ENCODE measurements at regions of chr6 and their contacts with region 1.

Region 1: DNA sequence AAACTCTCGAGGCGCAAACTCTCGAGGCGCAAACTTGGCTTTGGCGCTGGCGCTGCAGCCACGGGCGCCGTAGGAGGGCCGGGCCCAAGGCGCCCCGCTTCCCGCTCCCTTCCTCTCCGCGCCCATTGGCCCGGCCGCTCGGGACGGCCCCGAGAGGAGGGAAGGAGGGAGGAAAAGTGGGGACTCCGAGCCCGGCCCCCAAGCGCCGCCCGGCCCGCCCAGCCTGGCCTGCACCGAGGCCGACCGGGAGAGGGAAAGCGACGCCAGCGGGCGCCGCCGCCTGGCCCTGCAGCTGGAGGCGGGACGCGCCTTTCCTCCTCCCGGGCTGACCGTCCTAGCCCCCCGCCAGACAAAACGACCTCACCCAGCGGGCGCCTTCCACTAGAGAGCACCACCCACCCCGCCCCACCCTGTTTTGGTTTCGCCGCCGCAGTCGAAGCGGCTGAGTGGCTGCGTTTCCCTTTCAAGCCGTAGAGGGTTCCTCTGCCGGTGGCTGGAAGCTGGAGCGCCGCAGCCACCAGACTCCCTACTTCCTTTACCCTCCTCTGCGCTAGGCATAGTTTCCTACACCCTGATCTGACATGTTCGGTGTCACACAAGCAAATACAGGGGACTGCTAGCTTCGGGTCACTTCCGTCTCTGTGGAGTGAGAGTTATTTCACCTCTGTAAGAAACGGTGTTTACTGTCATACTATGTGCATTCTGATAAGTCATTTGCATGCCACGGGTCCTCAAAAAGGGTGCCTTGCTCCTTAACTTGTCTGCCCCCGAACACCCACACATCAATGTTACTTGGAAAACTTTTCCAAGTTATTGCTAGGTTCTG is at the start of gene MBOAT1:
- DNase-seq: peak; percentile 71
- H3K4me3 Mint-ChIP-seq: peak within 1 kb of the TSS; percentile 83
- H3K27ac Mint-ChIP-seq: peak within 1 kb of the TSS; percentile 85
- H3K4me1 Mint-ChIP-seq: peaks cover 30% of the 10 kb centered on the region
- H3K27me3 Mint-ChIP-seq: no peaks in the 10 kb centered on the region
- total RNA-seq, gene MBOAT1: 6.3 to 7.3 TPM

Region 2: DNA sequence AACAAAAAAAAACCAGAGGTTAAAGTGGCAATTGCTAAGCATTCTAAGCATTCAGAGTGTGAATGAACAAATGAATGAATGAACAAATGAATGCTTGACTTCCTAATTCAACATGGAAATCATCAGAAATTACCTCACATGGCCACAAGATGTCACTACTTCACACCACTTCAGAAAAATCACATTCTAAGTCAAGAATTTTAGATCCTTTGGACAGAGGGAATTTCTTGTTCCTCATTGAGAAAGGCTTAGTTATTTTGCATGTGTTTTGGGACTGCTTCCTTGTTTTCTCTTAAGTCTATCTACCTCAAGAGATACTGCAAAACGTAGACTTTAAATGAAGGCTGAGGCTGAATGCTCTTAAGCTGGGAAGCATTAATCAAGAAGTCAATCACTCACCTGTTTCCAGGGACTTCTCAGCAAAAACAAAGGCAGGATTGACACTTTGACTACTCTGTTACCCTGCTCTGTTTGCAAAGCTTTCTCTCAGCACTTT is 120.5 kb before region 1 on chr6:
- CTCF ChIA-PET with region 1: no interaction called
- intact Hi-C with region 1: loop called (anchors 1 kb)
- DNase-seq: peak; percentile 12
- H3K4me3 Mint-ChIP-seq: no peak overlapping the region
- H3K27ac Mint-ChIP-seq: no peak overlapping the region
- H3K4me1 Mint-ChIP-seq: no peaks in the 10 kb centered on the region
- H3K27me3 Mint-ChIP-seq: no peaks in the 10 kb centered on the region

Region 3: DNA sequence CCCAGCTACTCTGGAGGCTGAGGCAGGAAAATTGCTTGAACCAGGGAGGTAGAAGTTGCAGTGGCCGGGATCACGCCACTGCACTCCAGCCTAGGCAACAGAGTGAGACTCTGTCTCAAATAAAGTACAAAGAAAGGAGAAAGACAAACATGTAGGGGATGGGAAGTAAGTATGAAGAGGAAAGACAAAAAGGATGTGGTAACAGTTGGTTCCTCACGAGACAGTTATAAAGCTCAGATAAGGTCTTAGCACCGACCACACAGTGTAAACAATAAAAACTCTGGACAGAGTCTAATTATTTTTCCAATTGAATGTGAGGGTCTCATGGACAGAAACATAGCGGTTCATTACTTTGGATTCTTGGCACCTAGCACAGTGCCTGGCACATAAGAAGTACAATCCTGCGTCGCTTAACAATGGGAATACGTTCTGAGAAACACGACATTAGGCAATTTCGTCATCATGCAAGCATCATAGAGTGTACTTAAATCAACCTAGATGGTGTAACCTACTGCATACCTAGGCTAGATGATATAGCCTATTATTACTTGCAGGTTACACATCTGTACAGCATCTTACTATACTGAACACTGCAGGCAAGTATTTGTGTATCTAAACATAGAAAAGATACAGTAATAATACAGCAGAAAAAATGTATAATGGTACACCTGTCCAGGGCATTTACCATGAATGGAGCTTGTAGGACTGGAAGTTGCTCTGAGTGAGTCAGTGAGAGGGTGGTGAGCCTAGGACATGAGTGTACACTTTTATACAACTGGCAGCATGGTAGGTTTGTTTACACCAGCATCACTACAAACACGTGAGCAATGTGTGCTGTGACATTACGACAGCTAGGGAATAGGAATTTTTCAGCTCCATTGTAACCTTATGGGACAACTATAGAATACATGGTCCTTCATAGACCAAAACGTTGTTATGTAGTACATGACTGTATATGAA is 38.5 kb before region 1 on chr6:
- CTCF ChIA-PET with region 1: no interaction called
- intact Hi-C with region 1: loop called (anchors 5 kb)
- DNase-seq: no peak
- H3K4me3 Mint-ChIP-seq: no peak overlapping the region
- H3K27ac Mint-ChIP-seq: no peak overlapping the region
- H3K4me1 Mint-ChIP-seq: peaks cover 23% of the 10 kb centered on the region
- H3K27me3 Mint-ChIP-seq: no peaks in the 10 kb centered on the region

Region 4: DNA sequence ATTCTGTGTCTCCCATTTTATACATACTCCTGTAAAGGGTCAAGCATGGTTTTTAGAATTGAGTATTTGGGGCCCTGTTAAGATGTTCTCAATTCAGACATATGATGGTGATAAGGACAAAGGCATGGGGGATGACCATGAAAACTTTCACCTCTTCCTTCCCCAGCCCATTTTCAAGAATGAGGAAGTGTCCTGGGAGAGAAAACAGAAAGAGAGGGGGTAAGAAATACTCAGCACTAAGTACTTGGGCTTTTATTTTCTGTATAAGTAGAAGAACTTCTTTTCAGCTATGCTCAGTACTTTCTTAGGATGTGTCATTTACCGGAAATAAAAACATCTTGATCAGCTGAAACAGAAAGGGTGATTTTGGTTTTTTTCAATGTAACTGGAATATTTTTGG is 10.5 kb after region 1 on chr6:
- CTCF ChIA-PET with region 1: no interaction called
- intact Hi-C with region 1: no loop called
- DNase-seq: no peak
- H3K4me3 Mint-ChIP-seq: no peak overlapping the region
- H3K27ac Mint-ChIP-seq: no peak overlapping the region
- H3K4me1 Mint-ChIP-seq: no peaks in the 10 kb centered on the region
- H3K27me3 Mint-ChIP-seq: no peaks in the 10 kb centered on the region

Region 5: GRCh38 chr6:20266851-20267608 is 54.4 kb after region 1 on chr6:
- CTCF ChIA-PET with region 1: interaction called, 3 read pairs
- intact Hi-C with region 1: loop called (anchors 2 kb)
- DNase-seq: peak; percentile 30
- H3K4me3 Mint-ChIP-seq: no peak overlapping the region
- H3K27ac Mint-ChIP-seq: no peak overlapping the region
- H3K4me1 Mint-ChIP-seq: peaks cover 12% of the 10 kb centered on the region
- H3K27me3 Mint-ChIP-seq: no peaks in the 10 kb centered on the region

Region 6: DNA sequence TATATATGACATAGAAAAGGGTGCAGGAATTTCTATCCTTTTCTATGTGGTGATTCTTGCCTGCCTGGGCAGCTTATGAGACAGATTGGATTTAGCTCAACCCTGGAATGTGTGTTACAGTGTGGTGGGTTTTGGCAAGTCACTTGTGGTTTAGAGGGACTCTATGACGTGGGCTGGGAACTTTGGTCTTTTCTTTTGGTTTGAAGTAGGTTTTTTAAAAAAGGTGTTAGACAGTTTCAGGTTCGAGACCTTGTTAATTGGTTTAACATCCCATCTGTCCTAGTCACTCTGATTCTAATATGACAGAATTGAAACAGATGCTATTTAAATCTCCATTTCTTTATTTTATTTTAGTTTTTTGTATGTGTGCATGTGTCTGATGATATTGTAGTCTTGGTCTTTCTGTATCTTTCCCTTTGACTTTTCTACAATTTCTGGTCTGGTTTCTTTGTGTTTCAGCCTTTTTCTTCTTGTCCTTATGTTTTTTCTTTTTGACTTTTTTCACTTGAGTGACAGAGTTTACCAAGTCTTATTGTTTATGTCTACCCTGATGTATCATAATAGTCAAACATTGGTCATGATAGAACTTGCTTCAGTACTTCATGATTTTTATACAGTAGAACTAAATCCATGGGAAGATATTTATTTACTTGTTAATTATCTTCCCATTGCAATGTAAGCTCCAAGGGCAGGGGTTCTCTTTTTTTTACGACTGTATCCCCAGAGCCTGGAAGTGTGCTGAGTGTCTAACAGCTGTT is 495.9 kb after region 1 on chr6:
- CTCF ChIA-PET with region 1: no interaction called
- intact Hi-C with region 1: loop called (anchors 5 kb)
- DNase-seq: peak; percentile 62
- H3K4me3 Mint-ChIP-seq: no peak overlapping the region
- H3K27ac Mint-ChIP-seq: no peak overlapping the region
- H3K4me1 Mint-ChIP-seq: peaks cover 54% of the 10 kb centered on the region
- H3K27me3 Mint-ChIP-seq: no peaks in the 10 kb centered on the region